ENCODE measurements at regions of chr4 and their contacts with region 1.

Region 1: GRCh38 chr4:167021545-167022155 is 212.6 kb downstream of the SPOCK3 start:
- DNase-seq: peak; percentile 62
- ATAC-seq: peak; percentile 67 to 70
- H3K4me3 ChIP-seq: no peak overlapping the region
- H3K27ac ChIP-seq: no peak overlapping the region
- H3K4me1 ChIP-seq: no peaks in the 10 kb centered on the region
- H3K27me3 ChIP-seq: no peaks in the 10 kb centered on the region
- CTCF ChIP-seq: peak; percentile 69

Region 2: GRCh38 chr4:167290678-167291077 is 269.0 kb after region 1 on chr4:
- intact Hi-C with region 1: loop called (anchors 2 kb)
- DNase-seq: no peak
- ATAC-seq: no peak
- H3K4me3 ChIP-seq: no peak overlapping the region
- H3K27ac ChIP-seq: no peak overlapping the region
- H3K4me1 ChIP-seq: no peaks in the 10 kb centered on the region
- H3K27me3 ChIP-seq: no peaks in the 10 kb centered on the region
- CTCF ChIP-seq: peak; percentile 31

Measured in lower lobe of right lung (tissue), 2 donors.